Natural killer cell (primary cell): ENCODE measurements at regions of chr13 and their contacts with region 1.

Region 1: DNA sequence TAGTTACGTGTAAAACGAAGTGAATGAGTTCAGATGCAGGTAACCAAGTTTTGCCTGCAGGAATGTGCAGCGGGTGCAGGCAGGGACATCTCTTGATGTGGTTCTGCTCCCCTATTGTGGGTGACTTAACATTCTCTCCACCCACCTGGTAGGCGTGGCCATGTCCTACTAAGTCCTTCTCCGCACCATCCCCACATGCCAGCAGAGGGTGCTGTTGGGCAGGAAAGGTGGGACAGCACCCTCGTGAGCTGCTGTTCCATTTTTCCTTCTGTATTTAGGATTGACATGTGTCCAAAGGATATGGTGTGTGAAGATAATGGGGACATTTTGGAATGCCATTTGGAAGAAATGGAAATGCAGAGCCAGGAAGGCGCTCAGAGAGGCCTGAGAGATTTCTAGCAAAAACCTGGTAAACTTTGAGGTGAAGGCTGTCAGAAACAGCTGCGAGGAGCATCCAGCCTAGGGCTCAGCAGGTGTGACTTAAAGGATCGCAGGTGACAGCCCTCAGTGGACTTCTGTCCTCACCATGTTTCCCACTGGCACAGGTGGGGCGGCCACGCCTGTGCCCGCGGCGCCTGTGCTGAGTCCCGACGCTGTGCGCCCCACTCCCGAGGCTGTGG is 26.2 kb upstream of the MCF2L start:
- DNase-seq: peak; percentile 92 to 98
- ATAC-seq: peak; percentile 97 to 100 (median 100)
- H3K4me3 ChIP-seq: peak overlapping the region; percentile 14
- H3K4me3 Mint-ChIP-seq: peak overlapping the region; percentile 97
- H3K27ac ChIP-seq: no peak overlapping the region
- H3K27ac Mint-ChIP-seq: no peak overlapping the region
- H3K4me1 ChIP-seq: peaks cover 14% of the 10 kb centered on the region
- H3K4me1 Mint-ChIP-seq: peaks cover 7 to 8% of the 10 kb centered on the region in 2 donors
- H3K27me3 ChIP-seq: peaks cover 11% of the 10 kb centered on the region
- H3K27me3 Mint-ChIP-seq: peaks cover 29 to 35% of the 10 kb centered on the region in 2 donors
- CTCF ChIP-seq: peak; percentile 97

Region 2: DNA sequence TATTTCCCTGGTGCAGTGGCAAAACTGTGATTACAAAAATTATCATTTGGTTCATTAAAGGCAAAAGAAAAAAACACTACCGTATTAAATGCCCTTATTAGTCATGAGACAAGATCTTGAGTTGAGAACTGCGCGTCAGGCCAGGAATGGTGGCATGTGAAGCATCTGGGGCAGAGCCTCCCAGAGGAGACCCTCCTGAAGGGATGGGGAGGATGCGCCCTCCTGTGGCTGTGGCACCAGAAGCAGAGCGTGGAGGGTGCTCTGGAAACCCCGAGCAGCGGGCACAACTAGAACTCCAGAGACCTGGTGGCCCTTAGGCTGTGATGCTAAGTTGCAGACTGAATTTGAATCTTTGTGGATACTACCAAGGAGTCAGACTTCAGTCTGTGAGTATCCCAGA is 278.1 kb after region 1 on chr13:
- intact Hi-C with region 1: loop called (anchors 10 kb)
- DNase-seq: peak in 1 of 2 donors; percentile 54
- ATAC-seq: peak in 2 of 3 donors; percentile 52 to 56
- H3K4me3 ChIP-seq: no peak overlapping the region
- H3K4me3 Mint-ChIP-seq: no peak overlapping the region
- H3K27ac ChIP-seq: no peak overlapping the region
- H3K27ac Mint-ChIP-seq: no peak overlapping the region
- H3K4me1 ChIP-seq: peaks cover 9% of the 10 kb centered on the region
- H3K4me1 Mint-ChIP-seq: peaks cover 16 to 42% of the 10 kb centered on the region in 2 donors
- H3K27me3 ChIP-seq: no peaks in the 10 kb centered on the region
- H3K27me3 Mint-ChIP-seq: no peaks in the 10 kb centered on the region
- CTCF ChIP-seq: no peak

Region 3: DNA sequence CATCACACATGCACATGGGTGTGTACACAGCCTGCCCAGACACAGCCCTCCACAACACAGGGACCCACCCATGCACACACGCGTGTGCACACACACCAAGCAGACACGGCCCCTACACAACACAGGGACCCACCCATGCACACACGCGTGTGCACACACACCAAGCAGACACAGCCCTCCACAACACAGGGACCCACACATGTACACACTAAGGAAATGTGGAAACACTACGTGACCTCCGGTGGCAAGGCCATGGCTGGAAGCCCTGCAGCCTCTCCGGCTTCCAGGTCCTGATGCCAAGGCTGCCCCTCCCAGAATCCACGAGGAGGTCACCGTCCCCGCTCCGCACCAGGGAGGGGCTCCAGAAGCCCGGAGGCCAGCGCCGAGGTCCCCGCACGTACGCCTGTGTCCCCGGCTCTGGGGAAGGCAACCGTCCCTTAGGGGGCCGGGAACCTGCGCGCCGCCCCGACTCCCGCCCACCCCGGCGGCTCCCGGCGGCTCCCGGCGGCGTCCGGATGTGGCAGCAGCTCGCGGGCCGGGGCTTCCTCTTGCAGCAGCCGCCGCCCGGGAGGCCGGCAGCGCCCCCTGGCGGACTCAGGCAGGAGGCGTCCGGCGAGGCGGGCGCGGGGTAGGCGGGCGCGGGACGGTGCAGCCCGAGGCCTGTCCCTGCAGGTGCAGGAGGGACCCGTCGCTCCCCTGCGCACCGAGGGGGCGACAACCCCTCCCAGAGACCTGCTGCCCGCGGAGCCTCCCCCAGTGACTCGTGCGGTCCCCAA is 451.0 kb after region 1 on chr13:
- intact Hi-C with region 1: loop called (anchors 1 kb)
- DNase-seq: peak; percentile 83 to 90
- ATAC-seq: peak; percentile 95 to 99 (median 98)
- H3K4me3 ChIP-seq: peak overlapping the region; percentile 70
- H3K4me3 Mint-ChIP-seq: peak overlapping the region; percentile 83
- H3K27ac ChIP-seq: no peak overlapping the region
- H3K27ac Mint-ChIP-seq: peak overlapping the region in 1 of 2 donors; percentile 49
- H3K4me1 ChIP-seq: peaks cover 13% of the 10 kb centered on the region
- H3K4me1 Mint-ChIP-seq: peaks cover 5% of the 10 kb centered on the region in 2 donors
- H3K27me3 ChIP-seq: no peaks in the 10 kb centered on the region
- H3K27me3 Mint-ChIP-seq: no peaks in the 10 kb centered on the region
- CTCF ChIP-seq: peak; percentile 78

Region 4: DNA sequence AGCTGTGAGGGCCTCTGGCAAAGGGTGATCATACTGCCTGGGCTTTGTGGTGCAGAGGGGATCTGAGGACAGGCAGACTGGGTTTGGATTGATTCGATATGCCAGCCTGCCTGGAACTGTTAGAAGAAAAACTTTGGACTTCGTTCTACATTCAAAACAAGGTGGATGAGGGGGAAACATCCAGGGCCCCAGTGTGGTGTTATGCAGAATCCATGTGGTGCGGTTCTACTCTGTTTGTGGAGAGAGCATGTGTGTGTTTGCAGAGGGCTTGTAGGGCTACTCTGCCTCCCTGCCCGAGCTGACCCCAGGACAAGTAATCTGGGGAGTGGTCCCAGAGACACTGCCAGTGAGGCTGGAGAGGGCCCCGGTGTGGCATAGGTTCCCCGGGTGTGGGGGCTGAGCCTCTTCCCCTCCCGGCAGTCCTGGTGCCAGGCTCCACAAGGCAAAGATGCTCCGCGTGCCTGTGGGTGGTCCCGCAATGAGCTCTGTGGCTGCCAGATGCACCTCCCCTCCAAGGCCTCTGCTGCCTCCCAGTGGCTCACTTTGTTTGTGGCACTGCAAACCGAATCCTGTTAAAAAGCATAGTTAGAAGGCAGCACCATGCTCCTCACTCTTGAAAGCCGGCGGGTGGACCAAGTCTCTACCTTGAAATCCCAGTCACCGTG is 619.4 kb after region 1 on chr13:
- intact Hi-C with region 1: loop called (anchors 5 kb)
- DNase-seq: peak in 1 of 2 donors; percentile 59
- ATAC-seq: peak; percentile 53 to 73 (median 65)
- H3K4me3 ChIP-seq: no peak overlapping the region
- H3K4me3 Mint-ChIP-seq: no peak overlapping the region
- H3K27ac ChIP-seq: no peak overlapping the region
- H3K27ac Mint-ChIP-seq: no peak overlapping the region
- H3K4me1 ChIP-seq: peaks cover 12% of the 10 kb centered on the region
- H3K4me1 Mint-ChIP-seq: peaks cover 0 to 7% of the 10 kb centered on the region in 2 donors
- H3K27me3 ChIP-seq: no peaks in the 10 kb centered on the region
- H3K27me3 Mint-ChIP-seq: peaks cover 0 to 4% of the 10 kb centered on the region in 2 donors
- CTCF ChIP-seq: peak; percentile 34